Activated T-helper 1 cell treated with anti-CD3 and anti-CD28 coated beads, Interleukin-12 subunit alpha, Interleukin-12 subunit beta, Interleukin-2, Interleukin-4 antibody, amounts not matched to agents 30 ng/mL and 10 ng/mL and 1 ng/mL, durations not matched to agents 14 hours and 24 hours and 36 hours (primary cell): ENCODE measurements at regions of chr2 and their contacts with region 1.

Region 1: GRCh38 chr2:168194784-168195522 is 52.4 kb downstream of the STK39 start:
- DNase-seq: peak; percentile 27
- H3K4me3 Mint-ChIP-seq: peak overlapping the region; percentile 64
- H3K27ac Mint-ChIP-seq: peak overlapping the region; percentile 91
- H3K4me1 Mint-ChIP-seq: peaks cover 56% of the 10 kb centered on the region
- H3K27me3 Mint-ChIP-seq: no peaks in the 10 kb centered on the region

Region 2: DNA sequence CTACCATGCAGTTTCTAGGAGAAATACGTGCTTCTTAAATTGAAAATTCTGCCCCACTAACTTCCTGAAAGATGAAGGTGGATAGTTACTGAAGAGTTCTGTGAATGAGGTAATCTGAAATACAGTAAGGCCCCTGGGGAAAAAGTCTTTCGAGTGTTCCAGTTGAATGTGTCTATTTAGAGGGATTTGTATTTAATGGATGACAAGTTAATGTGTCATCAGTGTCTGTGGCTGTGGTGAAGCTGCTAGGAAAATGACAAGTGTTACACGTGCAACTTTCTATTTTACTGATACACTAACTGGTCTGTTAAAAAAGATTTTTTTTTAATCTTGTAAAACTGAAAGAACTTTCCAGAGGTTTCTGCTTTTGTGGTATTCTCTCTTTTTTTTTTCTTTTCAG is 332.2 kb before region 1 on chr2:
- intact Hi-C with region 1: loop called (anchors 10 kb)
- DNase-seq: peak; percentile 2
- H3K4me3 Mint-ChIP-seq: no peak overlapping the region
- H3K27ac Mint-ChIP-seq: no peak overlapping the region
- H3K4me1 Mint-ChIP-seq: peaks cover 20% of the 10 kb centered on the region
- H3K27me3 Mint-ChIP-seq: peaks cover 6% of the 10 kb centered on the region

Region 3: GRCh38 chr2:168166902-168167510 is 27.9 kb before region 1 on chr2:
- intact Hi-C with region 1: loop called (anchors 1 kb)
- DNase-seq: no peak
- H3K4me3 Mint-ChIP-seq: peak overlapping the region; percentile 58
- H3K27ac Mint-ChIP-seq: peak overlapping the region; percentile 64
- H3K4me1 Mint-ChIP-seq: peaks cover 30% of the 10 kb centered on the region
- H3K27me3 Mint-ChIP-seq: no peaks in the 10 kb centered on the region

Region 4: GRCh38 chr2:168536925-168537466 is 342.0 kb after region 1 on chr2:
- intact Hi-C with region 1: loop called (anchors 5 kb)
- DNase-seq: no peak
- H3K4me3 Mint-ChIP-seq: no peak overlapping the region
- H3K27ac Mint-ChIP-seq: no peak overlapping the region
- H3K4me1 Mint-ChIP-seq: peaks cover 44% of the 10 kb centered on the region
- H3K27me3 Mint-ChIP-seq: no peaks in the 10 kb centered on the region

Region 5: GRCh38 chr2:168890006-168890782 is 695.2 kb after region 1 on chr2 and contains the start of gene SPC25:
- intact Hi-C with region 1: loop called (anchors 10 kb)
- DNase-seq: peak; percentile 87
- H3K4me3 Mint-ChIP-seq: peak within 1 kb of the TSS; percentile 98
- H3K27ac Mint-ChIP-seq: peak within 1 kb of the TSS; percentile 92
- H3K4me1 Mint-ChIP-seq: peaks cover 32% of the 10 kb centered on the region
- H3K27me3 Mint-ChIP-seq: peaks cover 21% of the 10 kb centered on the region
- total RNA-seq, gene SPC25: 17.9 and 19.9 TPM in 2 replicates